Esophagus muscularis mucosa (tissue), 4 donors: ENCODE measurements at regions of chr19 and their contacts with region 1.

Region 1: DNA sequence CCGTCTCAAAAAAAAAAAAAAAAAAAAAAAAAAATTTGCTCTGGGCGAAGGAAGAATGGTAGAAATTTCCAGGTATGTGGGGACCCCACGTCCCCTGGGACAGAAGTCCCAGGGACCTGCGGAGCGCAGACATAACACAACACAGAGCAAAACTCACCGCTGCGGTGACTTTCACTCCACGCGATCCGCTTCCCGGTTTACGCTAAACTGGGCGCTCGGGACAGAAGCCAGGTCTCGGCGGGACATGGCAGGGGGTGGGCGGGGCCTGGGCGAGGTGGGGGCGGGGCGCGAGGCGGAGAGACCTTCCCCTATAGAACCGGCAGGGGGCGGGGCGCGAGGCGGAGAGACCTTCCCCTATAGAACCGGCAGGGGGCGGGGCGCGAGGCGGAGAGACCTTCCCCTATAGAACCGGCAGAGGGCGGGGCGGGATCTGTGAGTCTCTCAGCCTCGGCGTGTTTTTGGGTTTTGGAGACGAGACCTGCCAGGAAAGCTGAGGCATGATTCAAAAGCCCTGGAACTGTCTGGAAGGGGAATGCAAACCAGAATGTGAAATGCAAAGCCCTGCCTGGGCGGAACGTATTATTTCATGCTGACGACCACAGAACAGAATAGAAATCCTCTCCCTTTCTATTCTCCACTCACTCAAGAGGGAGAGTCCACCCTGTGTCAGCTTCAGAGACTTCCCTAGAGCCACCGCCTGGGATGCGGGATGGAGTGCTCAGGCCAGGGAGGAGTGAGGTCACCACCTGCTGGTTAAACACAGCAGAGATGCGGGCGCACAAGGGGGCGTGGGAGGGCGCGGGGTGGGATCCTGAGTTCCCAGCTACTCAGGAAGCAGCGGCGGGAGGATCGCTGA is 20.2 kb upstream of the ERVV-1 start:
- DNase-seq: no peak
- H3K4me3 ChIP-seq: peak overlapping the region; percentile 55 to 59 (median 58)
- H3K27ac ChIP-seq: peak overlapping the region; percentile 72 to 83 (median 74)
- H3K4me1 ChIP-seq: peaks cover 11 to 30% (median 25%) of the 10 kb centered on the region in 4 donors
- H3K27me3 ChIP-seq: peaks cover 0 to 6% (median 0%) of the 10 kb centered on the region in 4 donors
- CTCF ChIP-seq: peak; percentile 39 to 67 (median 55)
- EP300 ChIP-seq: no peak
- POLR2A ChIP-seq: no peak

Region 2: GRCh38 chr19:52962394-52963246 is 30.9 kb before region 1 on chr19 and contains the start of gene ZNF816:
- intact Hi-C with region 1: loop called (anchors 2 kb)
- DNase-seq: peak; percentile 99
- H3K4me3 ChIP-seq: peak within 1 kb of the TSS; percentile 64 to 73 (median 68)
- H3K27ac ChIP-seq: peak within 1 kb of the TSS; percentile 78 to 86 (median 82)
- H3K4me1 ChIP-seq: peaks cover 14 to 21% (median 21%) of the 10 kb centered on the region in 4 donors
- H3K27me3 ChIP-seq: no peaks in the 10 kb centered on the region
- CTCF ChIP-seq: peak in 1 of 3 experiments; percentile 5
- EP300 ChIP-seq: no peak
- POLR2A ChIP-seq: no peak
- total RNA-seq, gene ZNF816: 4.0 to 12.9 (median 6.0) TPM

Region 3: DNA sequence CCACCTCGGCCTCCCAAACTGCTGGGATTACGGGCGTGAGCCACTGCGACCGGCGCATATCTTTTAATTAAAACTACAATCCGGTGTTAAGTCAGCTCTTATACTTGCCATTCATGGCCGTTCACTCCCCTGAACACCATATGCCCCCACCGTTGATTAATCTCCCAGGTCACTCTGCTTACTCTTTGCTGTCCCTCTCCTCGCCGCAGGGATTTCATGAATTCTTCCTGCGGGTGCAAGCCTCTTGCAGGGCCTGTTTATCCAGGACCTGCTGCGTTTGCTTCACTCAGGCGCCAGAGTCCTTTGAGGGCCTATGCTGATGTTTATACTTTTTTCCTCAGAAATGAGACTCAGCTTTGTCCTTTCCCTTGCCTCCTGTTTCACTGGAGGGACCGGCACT is 52.0 kb after region 1 on chr19:
- intact Hi-C with region 1: no loop called
- DNase-seq: no peak
- H3K4me3 ChIP-seq: no peak overlapping the region
- H3K27ac ChIP-seq: no peak overlapping the region
- H3K4me1 ChIP-seq: no peaks in the 10 kb centered on the region
- H3K27me3 ChIP-seq: peaks cover 0 to 55% (median 0%) of the 10 kb centered on the region in 4 donors
- CTCF ChIP-seq: no peak
- EP300 ChIP-seq: no peak
- POLR2A ChIP-seq: no peak